Ascending aorta (tissue), 2 donors: ENCODE measurements at regions of chr10 and their contacts with region 1.

Region 1: DNA sequence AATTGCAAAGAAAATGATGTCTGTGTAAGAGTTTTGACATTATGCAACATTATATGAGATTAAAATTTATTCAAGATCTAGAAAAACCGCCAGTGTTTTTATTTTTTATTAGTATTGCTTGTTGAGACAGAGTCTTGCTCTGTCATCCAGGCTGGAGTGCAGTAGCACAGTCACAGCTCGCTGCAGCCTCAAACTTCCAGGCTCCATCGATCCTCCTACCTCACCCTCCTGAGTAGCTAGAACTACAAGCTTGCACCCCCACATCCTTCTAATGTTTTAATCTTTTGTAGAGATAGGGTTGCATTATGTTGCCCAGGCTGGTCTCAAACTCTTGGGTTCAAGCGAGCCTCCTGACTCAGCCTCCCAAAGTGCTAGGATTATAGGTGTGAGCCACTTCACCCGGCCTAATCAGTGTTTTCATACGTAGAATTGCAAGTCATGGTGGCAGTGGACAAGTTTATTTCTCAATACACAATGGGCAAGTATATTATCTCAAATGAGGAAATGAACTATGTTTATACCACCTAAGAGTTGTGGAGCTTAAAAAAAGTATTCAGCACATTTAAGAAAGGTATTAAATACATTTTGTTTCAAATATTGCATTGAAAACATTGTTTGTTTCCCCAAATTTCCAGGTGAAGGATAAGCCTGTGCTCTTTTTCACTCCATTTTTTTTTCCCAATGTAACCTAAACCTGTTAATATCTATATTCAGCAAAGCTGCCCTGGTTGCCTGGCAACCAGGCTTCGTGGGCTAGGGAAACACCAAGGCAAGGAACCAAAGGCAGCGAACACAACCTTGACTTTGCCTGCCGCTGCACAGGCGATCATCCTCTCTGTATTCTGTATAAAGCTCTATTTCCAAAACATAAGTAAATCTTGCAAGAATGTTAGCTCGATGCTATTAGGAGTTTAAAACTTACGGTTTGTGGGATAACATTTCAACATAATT is 163.9 kb downstream of the CACNB2 start:
- DNase-seq: no peak
- H3K4me3 ChIP-seq: no peak overlapping the region
- H3K27ac ChIP-seq: no peak overlapping the region
- H3K4me1 ChIP-seq: peaks cover 0 to 8% of the 10 kb centered on the region in 2 donors
- H3K27me3 ChIP-seq: no peaks in the 10 kb centered on the region
- CTCF ChIP-seq: no peak

Region 2: GRCh38 chr10:16470747-16471146 is 1833.4 kb before region 1 on chr10:
- intact Hi-C with region 1: no loop called
- DNase-seq: no peak
- H3K4me3 ChIP-seq: no peak overlapping the region
- H3K27ac ChIP-seq: no peak overlapping the region
- H3K4me1 ChIP-seq: no peaks in the 10 kb centered on the region
- H3K27me3 ChIP-seq: no peaks in the 10 kb centered on the region
- CTCF ChIP-seq: no peak

Region 3: GRCh38 chr10:17923728-17924127 is 380.4 kb before region 1 on chr10:
- intact Hi-C with region 1: loop called (anchors 10 kb)
- DNase-seq: peak in 1 of 2 donors; percentile 88
- H3K4me3 ChIP-seq: no peak overlapping the region
- H3K27ac ChIP-seq: peak overlapping the region; percentile 74 to 75
- H3K4me1 ChIP-seq: peaks cover 2 to 10% of the 10 kb centered on the region in 2 donors
- H3K27me3 ChIP-seq: no peaks in the 10 kb centered on the region
- CTCF ChIP-seq: no peak

Region 4: DNA sequence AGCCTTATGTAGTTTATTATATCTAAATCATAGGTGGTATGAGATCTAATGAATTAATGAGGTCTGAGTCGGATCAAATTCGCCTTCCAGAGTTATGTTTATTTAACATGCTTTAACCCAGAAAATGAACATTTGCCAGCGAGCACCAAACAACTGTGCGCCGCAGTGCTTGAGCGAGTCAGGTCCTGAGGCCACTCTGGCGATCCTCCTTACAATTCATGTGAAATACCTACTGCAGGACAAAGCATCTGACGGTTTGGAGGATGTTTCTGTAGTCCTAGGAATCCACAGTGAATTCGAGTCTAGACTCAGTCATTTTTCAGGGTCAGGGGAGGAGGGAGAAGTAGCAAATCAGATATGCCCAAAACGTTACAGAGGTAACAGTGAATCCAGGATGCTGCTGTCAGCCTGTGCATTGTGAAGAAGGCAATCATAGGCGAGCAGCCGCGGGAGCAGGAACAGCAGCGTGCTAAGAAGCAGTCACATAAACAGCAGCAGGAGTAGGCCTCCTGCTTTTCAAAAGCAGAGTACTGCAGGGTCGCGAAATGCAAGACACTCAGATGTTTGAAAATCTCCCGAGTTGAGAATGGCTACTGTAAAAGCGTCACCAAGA is 43.7 kb before region 1 on chr10:
- intact Hi-C with region 1: no loop called
- DNase-seq: no peak
- H3K4me3 ChIP-seq: no peak overlapping the region
- H3K27ac ChIP-seq: no peak overlapping the region
- H3K4me1 ChIP-seq: no peaks in the 10 kb centered on the region
- H3K27me3 ChIP-seq: no peaks in the 10 kb centered on the region
- CTCF ChIP-seq: no peak